ENCODE measurements at regions of chr2 and their contacts with region 1.

Region 1: GRCh38 chr2:83233301-83233700 is 1225.8 kb downstream of the SUCLG1 start:
- DNase-seq: no peak
- H3K4me3 ChIP-seq: no peak overlapping the region
- H3K27ac ChIP-seq: no peak overlapping the region
- H3K4me1 ChIP-seq: no peaks in the 10 kb centered on the region
- H3K27me3 ChIP-seq: no peaks in the 10 kb centered on the region
- CTCF ChIP-seq: no peak

Region 2: DNA sequence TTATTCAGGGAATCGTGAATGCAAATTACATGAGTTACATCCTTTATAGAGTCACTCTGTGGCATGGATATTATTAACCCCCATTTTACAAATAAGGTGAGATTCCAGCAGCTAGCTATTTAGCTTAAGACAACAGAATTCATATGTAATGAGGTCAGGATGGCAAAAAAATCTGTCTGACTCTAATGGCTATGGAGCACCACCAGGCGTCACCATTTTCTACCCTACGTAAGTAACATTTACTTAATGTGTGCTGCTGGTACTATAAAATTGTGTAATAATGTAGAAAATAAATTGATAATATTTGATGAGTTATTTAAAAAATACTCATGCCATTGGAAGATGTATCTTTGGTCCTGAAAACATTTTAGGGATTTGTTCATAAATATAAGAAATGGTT is 888.6 kb before region 1 on chr2:
- intact Hi-C with region 1: loop called (anchors 5 kb)
- DNase-seq: no peak
- H3K4me3 ChIP-seq: no peak overlapping the region
- H3K27ac ChIP-seq: no peak overlapping the region
- H3K4me1 ChIP-seq: peaks cover 8% of the 10 kb centered on the region
- H3K27me3 ChIP-seq: no peaks in the 10 kb centered on the region
- CTCF ChIP-seq: peak; percentile 25

Measured in left ventricle myocardium inferior (tissue), 1 donor.